K562 (cell line): ENCODE measurements at regions of chr17 and their contacts with region 1.

Region 1: GRCh38 chr17:82292251-82293154 is 19.0 kb upstream of the CSNK1D start:
- DNase-seq: peak; percentile 92 to 99 (median 96)
- ATAC-seq: peak; percentile 96
- H3K4me3 ChIP-seq: peak overlapping the region; percentile 86
- H3K27ac ChIP-seq: peak overlapping the region; percentile 93
- H3K4me1 ChIP-seq: peaks cover 78 to 79% of the 10 kb centered on the region in 2 experiments
- H3K27me3 ChIP-seq: no peaks in the 10 kb centered on the region
- CTCF ChIP-seq: no peak
- EP300 ChIP-seq: no peak; the same call in 1 of the 2 replicates
- POLR2A ChIP-seq: peak; percentile 99
- RAD21 ChIP-seq: no peak

Region 2: DNA sequence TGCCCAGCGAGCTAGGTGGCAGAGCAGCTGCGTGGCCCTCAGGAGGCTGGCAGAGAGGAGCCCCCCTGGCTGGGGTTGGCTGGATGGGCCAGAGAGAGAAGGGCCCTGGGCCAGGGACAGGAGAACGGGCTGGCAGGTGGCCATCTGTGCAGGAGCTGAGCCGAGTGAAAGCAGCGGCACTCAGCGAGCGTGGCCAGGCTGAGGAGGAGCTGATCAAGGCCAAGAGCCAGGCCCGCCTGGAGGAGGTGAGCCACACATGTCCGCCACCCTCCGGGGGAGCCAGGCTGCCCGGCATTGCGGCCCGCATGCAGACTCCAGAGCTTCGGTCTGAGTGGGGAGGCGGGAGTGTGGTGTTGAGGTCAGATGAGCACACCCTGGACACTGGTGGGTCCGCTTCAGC is 263.1 kb before region 1 on chr17:
- CTCF ChIA-PET with region 1: no interaction called
- POLR2A ChIA-PET with region 1: no interaction called
- in situ Hi-C with region 1: no loop called
- intact Hi-C with region 1: no loop called
- DNase-seq: no peak
- ATAC-seq: no peak
- H3K4me3 ChIP-seq: no peak overlapping the region
- H3K27ac ChIP-seq: no peak overlapping the region
- H3K4me1 ChIP-seq: peaks cover 8 to 89% of the 10 kb centered on the region in 2 experiments
- H3K27me3 ChIP-seq: no peaks in the 10 kb centered on the region
- CTCF ChIP-seq: no peak
- EP300 ChIP-seq: no peak
- POLR2A ChIP-seq: no peak
- RAD21 ChIP-seq: no peak

Region 3: GRCh38 chr17:82153745-82154375 is 138.6 kb before region 1 on chr17:
- CTCF ChIA-PET with region 1: no interaction called
- POLR2A ChIA-PET with region 1: no interaction called
- in situ Hi-C with region 1: no loop called
- intact Hi-C with region 1: no loop called
- DNase-seq: peak; percentile 85 to 90 (median 88)
- ATAC-seq: peak; percentile 99
- H3K4me3 ChIP-seq: no peak overlapping the region
- H3K27ac ChIP-seq: no peak overlapping the region
- H3K4me1 ChIP-seq: peaks cover 0 to 44% of the 10 kb centered on the region in 2 experiments; a peak in 3 of 5 replicates
- H3K27me3 ChIP-seq: no peaks in the 10 kb centered on the region
- CTCF ChIP-seq: peak; percentile 96 to 98 (median 96)
- EP300 ChIP-seq: no peak
- POLR2A ChIP-seq: no peak
- RAD21 ChIP-seq: peak; percentile 98 to 99

Region 4: GRCh38 chr17:82273327-82274133 is 19.0 kb before region 1 on chr17 and contains the start of gene CSNK1D:
- CTCF ChIA-PET with region 1: interaction called, 3 read pairs
- POLR2A ChIA-PET with region 1: interaction called, 37 read pairs
- in situ Hi-C with region 1: no loop called
- intact Hi-C with region 1: no loop called
- DNase-seq: peak; percentile 92 to 95 (median 94)
- ATAC-seq: peak; percentile 89
- H3K4me3 ChIP-seq: peak within 1 kb of the TSS; percentile 96
- H3K27ac ChIP-seq: peak within 1 kb of the TSS; percentile 98
- H3K4me1 ChIP-seq: peaks cover 34 to 70% of the 10 kb centered on the region in 2 experiments
- H3K27me3 ChIP-seq: no peaks in the 10 kb centered on the region
- CTCF ChIP-seq: no peak
- EP300 ChIP-seq: no peak
- POLR2A ChIP-seq: peak; percentile 83
- RAD21 ChIP-seq: no peak
- polyA plus RNA-seq, gene CSNK1D: 6.5 to 7.4 TPM

Region 5: DNA sequence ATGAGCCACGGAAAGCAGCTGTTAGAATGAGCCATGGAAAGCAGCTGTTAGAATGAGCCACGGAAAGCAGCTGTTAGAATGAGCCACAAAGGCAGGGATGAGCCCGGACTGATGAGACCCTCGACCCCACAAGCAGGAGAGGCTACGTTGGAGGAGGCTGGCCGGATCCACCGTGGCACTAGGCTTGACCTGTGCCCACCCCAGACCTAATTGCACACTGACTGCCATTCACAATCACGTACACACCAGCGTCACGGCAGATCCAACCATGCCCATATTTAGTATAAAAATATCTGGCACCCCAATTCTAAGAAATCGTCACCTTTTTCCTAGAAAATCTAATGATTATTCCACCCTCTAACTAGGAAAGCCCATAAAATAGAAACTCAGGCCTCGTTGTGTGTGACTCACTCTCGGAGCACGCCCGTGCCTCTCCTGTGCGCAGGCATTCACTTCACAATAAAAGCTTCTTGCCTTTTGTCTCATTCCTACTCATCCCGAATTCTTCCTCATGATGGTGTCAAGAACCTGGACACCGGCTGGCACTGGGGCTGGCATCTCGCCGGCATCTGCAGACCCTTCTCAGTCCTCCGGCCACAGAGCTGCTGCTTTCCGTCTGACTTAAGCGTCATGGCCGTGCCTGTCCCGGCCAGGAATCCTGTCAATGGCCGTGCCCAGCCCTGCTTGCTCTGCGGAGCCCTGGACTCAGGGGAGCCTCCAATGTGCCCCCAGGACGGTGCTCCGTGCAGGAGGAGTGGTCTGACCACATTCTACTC is 46.5 kb after region 1 on chr17:
- CTCF ChIA-PET with region 1: no interaction called
- POLR2A ChIA-PET with region 1: interaction called, 6 read pairs
- in situ Hi-C with region 1: no loop called
- intact Hi-C with region 1: loop called (anchors 5 kb)
- DNase-seq: peak; percentile 76 to 89 (median 80)
- ATAC-seq: peak; percentile 88
- H3K4me3 ChIP-seq: peak overlapping the region; percentile 13; the same call in 1 of the 2 replicates
- H3K27ac ChIP-seq: peak overlapping the region; percentile 87
- H3K4me1 ChIP-seq: peaks cover 40 to 74% of the 10 kb centered on the region in 2 experiments
- H3K27me3 ChIP-seq: no peaks in the 10 kb centered on the region
- CTCF ChIP-seq: no peak
- EP300 ChIP-seq: no peak
- POLR2A ChIP-seq: no peak
- RAD21 ChIP-seq: no peak